Activated T-helper 1 cell treated with anti-CD3 and anti-CD28 coated beads, Interleukin-12 subunit alpha, Interleukin-12 subunit beta, Interleukin-2, Interleukin-4 antibody, amounts not matched to agents 30 ng/mL and 10 ng/mL and 1 ng/mL, durations not matched to agents 14 hours and 24 hours and 36 hours (primary cell): ENCODE measurements at regions of chr20 and their contacts with region 1.

Region 1: DNA sequence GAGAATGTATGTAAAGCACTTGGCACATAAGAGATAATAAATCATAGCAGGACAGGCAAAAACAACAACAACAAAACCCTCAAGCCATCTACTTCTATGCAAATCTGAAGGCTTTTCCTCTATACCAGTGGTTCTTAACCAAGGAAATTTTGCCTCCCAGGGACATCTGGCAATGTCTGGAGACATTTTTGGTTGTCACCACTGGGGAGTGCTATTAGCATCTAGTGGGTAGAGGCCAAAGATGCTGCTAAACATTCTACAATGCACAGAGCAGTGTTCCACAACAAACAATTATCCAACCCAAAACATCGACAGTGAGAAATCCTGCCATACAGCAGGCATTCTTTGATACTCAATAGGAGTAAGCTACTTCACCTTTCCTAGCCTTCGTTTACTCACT is 28.2 kb downstream of the NDRG3 start:
- DNase-seq: no peak
- H3K4me3 Mint-ChIP-seq: no peak overlapping the region
- H3K27ac Mint-ChIP-seq: no peak overlapping the region
- H3K4me1 Mint-ChIP-seq: peaks cover 14% of the 10 kb centered on the region
- H3K27me3 Mint-ChIP-seq: peaks cover 1% of the 10 kb centered on the region

Region 2: GRCh38 chr20:36591854-36592641 is 125.6 kb before region 1 on chr20:
- intact Hi-C with region 1: loop called (anchors 1 kb)
- DNase-seq: peak; percentile 36
- H3K4me3 Mint-ChIP-seq: peak overlapping the region; percentile 27
- H3K27ac Mint-ChIP-seq: peak overlapping the region; percentile 77
- H3K4me1 Mint-ChIP-seq: peaks cover 62% of the 10 kb centered on the region
- H3K27me3 Mint-ChIP-seq: no peaks in the 10 kb centered on the region

Region 3: DNA sequence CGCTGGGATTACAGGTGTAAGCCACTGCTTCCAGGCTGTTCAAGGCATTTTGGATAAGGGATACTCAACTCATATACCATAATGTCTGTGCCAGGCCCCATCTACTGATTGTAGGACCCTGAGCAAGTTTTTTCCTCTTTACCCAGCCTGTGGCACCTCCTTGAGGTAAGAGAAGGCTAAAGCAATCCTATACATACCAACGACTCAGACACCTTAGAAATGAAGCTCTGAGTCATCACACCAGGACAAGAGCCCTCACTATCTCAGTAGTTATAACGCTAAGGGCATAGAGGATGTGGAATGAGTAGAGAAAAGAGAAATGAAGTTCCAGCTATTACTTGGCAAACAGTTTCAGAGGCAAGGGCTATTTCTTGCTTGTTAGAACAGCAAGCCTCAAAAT is 11.3 kb after region 1 on chr20:
- intact Hi-C with region 1: loop called (anchors 1 kb)
- DNase-seq: no peak
- H3K4me3 Mint-ChIP-seq: no peak overlapping the region
- H3K27ac Mint-ChIP-seq: no peak overlapping the region
- H3K4me1 Mint-ChIP-seq: peaks cover 12% of the 10 kb centered on the region
- H3K27me3 Mint-ChIP-seq: no peaks in the 10 kb centered on the region

Region 4: DNA sequence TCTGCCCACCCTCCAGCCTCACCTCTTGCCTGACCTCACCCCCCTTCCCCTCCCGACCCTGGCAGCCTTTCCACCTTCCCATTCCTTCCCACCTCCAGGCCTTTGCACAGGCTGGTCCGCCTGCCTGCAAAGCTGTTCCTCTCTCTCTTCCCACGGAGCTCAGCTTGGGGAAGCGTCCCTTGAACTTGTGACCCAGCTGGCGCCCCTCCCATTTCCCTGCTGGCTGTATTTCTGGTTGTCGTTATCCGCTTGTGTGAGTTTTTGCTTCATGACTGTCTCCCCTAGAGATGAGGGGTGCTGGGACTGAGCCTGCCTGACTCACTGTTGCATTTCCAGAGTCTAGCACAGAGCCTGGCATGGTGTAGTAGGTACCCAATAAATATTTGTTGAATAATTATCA is 1217.8 kb after region 1 on chr20:
- intact Hi-C with region 1: no loop called
- DNase-seq: no peak
- H3K4me3 Mint-ChIP-seq: no peak overlapping the region
- H3K27ac Mint-ChIP-seq: no peak overlapping the region
- H3K4me1 Mint-ChIP-seq: no peaks in the 10 kb centered on the region
- H3K27me3 Mint-ChIP-seq: peaks cover 7% of the 10 kb centered on the region